HEK293T (cell line): ENCODE measurements at regions of chr14 and their contacts with region 1.

Region 1: DNA sequence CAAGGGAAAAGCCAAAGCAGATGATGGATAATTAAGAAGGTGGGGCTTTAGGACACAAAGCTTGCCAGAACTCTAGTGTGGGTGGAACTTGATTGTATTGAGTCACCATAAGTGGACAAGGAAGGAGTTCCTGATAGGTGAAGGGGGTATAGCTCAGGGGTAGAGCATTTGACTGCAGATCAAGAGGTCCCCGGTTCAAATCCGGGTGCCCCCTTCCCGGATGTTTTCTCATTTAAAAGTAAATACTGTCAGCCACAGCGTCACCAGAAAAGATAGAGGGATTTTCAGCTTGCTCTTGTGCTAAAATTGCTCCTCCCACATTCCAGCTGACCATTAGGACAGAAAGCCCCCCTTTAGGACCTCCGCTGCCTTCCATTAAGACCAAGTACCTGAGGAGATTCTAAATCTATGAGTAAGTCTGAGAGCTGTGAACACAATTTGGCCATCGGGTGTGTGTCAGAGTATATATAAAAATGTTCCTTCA is 36.6 kb downstream of the DCAF4 start:
- DNase-seq: peak; percentile 30

Region 2: DNA sequence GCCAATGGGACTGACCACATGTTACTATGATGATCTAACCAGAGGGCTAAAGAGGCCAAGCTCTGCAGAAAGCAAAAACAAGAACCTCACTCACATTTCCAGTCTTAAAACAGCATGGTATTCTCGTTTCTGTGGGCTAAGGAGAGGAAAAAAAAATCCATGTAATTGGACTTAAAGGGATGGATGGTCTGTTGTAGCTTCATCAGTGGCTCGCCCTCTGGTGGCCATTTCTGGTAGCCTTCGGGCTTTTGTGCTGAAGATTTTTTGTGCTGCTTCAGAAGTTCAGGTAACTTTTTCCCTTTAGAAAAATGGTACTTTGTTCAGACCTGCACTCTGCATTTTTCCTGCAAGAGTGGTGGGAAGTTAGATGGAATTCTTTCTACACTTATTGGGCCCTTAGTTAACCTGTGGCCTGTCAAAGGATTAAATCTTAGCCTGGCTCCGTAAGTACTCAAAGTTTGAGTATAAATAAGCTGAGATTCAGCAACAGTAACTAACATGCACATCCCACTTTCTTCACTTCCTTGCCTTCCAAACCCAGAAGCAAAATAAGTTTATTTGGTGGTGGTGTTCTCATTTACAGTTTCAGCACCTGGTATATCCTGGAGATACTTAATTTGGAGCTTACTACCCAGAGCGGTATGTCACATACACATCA is 14.3 kb before region 1 on chr14:
- CTCF ChIA-PET with region 1: interaction called, 19 read pairs
- POLR2A ChIA-PET with region 1: no interaction called
- DNase-seq: peak; percentile 65